ENCODE measurements at regions of chr3 and their contacts with region 1.

Region 1: DNA sequence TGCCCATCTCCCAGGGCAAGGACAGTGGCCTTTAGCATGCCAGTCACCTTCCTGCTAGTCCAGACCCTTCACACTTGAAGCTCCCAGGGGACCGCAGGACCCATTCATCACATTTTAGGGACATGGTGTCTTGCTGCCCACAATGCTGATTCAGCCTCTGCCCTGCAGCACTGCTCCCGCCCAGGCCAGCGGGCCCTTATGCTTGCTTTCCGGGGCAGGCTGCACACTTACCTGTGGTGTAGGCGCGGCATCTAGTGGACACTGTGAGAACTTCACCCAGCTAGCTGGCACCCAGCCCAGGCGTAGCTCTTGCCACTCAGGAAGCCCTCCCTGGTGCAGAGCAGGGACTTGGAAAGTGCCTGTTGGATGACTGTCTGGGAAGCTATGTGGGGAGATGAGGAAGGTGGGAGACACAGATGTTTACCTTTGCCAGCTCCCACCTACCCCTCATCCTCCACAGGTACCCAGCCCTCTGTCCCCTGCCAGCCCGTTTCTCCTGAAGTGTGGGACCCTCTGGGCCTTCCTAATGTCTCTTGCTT is 26.2 kb upstream of the NR2C2 start:
- DNase-seq: peak; percentile 76 to 95
- H3K4me3 ChIP-seq: no peak overlapping the region
- H3K27ac ChIP-seq: no peak overlapping the region
- H3K4me1 ChIP-seq: peaks cover 0 to 9% (median 1%) of the 10 kb centered on the region in 4 experiments; a peak in 4 of 7 replicates
- H3K27me3 ChIP-seq: no peaks in the 10 kb centered on the region
- CTCF ChIP-seq: peak in 2 of 3 experiments; percentile 97 to 99; a peak in 3 of 4 replicates
- EP300 ChIP-seq: peak in 1 of 2 experiments; percentile 22; a peak in 1 of 3 replicates
- POLR2A ChIP-seq: no peak
- RAD21 ChIP-seq: peak; percentile 99 to 100

Region 2: DNA sequence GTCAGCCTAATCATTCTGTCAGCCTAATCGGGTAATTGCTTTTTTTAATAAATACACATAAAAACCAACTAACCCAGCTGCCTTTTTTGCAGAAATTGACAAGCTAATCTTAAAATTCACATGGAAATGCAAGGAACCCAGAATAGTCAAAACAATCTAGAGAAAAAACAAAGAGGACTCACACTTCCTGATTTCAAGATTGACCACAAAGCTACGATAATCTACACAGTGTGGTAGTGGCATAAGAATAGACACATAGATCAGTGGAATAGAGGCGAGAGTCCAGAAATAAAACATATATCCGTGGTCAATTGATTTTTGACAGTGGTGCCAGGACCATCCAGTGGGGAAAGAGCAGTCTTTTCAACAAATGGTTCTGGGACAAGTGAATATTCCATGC is 248.6 kb before region 1 on chr3:
- CTCF ChIA-PET with region 1: interaction called, 82 read pairs
- POLR2A ChIA-PET with region 1: interaction called, 3 read pairs
- DNase-seq: no peak
- H3K4me3 ChIP-seq: no peak overlapping the region
- H3K27ac ChIP-seq: no peak overlapping the region
- H3K4me1 ChIP-seq: no peaks in the 10 kb centered on the region
- H3K27me3 ChIP-seq: no peaks in the 10 kb centered on the region
- CTCF ChIP-seq: no peak
- EP300 ChIP-seq: no peak
- POLR2A ChIP-seq: no peak
- RAD21 ChIP-seq: no peak

Region 3: GRCh38 chr3:14791343-14791945 is 129.7 kb before region 1 on chr3:
- CTCF ChIA-PET with region 1: interaction called, 308 read pairs
- POLR2A ChIA-PET with region 1: interaction called, 5 read pairs
- DNase-seq: peak; percentile 57 to 89
- H3K4me3 ChIP-seq: peak overlapping the region in 1 of 4 experiments; percentile 42; a peak in 1 of 8 replicates
- H3K27ac ChIP-seq: no peak overlapping the region
- H3K4me1 ChIP-seq: peaks cover 0 to 4% (median 2%) of the 10 kb centered on the region in 4 experiments; a peak in 4 of 7 replicates
- H3K27me3 ChIP-seq: peaks cover 0 to 3% (median 0%) of the 10 kb centered on the region in 4 experiments; a peak in 1 of 7 replicates
- CTCF ChIP-seq: peak; percentile 91 to 97 (median 96)
- EP300 ChIP-seq: no peak
- POLR2A ChIP-seq: no peak
- RAD21 ChIP-seq: peak; percentile 97 to 98

Region 4: DNA sequence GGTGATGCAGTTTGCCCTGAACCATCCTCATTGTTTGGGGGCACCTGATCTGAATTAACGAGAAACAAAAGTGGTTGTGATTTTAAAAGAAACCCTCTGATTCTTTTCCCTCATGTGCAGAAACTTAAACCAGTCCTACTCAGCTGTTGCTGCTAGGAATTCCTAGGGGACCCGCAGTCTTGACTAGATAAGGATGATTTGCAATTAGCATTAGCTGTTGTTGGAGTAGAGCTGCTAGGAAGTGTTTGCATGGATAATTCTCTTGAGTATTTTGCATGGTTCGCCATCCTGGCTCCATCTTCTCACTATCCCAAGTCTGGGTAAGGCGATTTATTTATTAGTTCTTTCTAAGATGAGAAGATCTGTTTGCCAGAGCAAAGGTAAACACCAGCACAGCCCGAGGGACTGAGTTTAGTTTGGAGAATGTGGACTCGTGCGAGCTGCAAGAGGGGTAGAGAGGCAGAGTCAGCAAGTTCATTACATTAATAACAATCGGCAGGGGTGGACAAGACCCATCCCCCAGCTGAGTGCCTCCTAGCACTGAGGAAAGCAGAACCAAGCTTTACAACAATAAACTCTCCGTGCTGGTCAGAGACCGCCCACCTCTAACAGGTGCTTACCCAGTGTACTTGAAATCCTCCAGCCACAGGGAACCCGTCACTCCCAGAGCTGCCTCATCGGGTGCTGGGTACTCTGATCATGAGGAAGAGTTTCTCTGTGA is 98.3 kb before region 1 on chr3:
- CTCF ChIA-PET with region 1: interaction called, 14 read pairs
- POLR2A ChIA-PET with region 1: no interaction called
- DNase-seq: no peak
- H3K4me3 ChIP-seq: no peak overlapping the region
- H3K27ac ChIP-seq: no peak overlapping the region
- H3K4me1 ChIP-seq: peaks cover 3 to 7% (median 5%) of the 10 kb centered on the region in 4 experiments; a peak in 6 of 7 replicates
- H3K27me3 ChIP-seq: no peaks in the 10 kb centered on the region
- CTCF ChIP-seq: no peak
- EP300 ChIP-seq: no peak
- POLR2A ChIP-seq: no peak
- RAD21 ChIP-seq: no peak

Region 5: DNA sequence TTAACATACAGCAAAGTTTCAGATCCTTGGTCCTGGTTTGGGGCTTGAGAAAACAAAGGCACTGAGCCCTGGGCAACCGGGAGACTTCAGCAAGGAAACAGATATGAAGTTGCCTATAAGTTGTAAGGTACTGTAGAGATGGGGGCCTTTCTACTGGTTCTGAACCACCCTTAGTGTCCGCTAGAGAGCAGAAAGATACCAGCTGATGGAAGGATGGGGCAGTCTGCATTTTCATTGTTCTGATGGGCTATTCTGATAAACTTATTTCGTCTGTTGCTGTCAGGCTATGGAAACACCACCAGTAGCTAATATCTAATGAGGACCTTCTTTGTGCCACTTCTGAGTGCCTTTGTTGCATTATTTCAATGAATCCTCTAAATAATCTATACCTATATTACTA is 63.6 kb before region 1 on chr3:
- CTCF ChIA-PET with region 1: interaction called, 54 read pairs
- POLR2A ChIA-PET with region 1: no interaction called
- DNase-seq: no peak
- H3K4me3 ChIP-seq: no peak overlapping the region
- H3K27ac ChIP-seq: no peak overlapping the region
- H3K4me1 ChIP-seq: peaks cover 3 to 8% (median 5%) of the 10 kb centered on the region in 4 experiments
- H3K27me3 ChIP-seq: no peaks in the 10 kb centered on the region; a peak in 1 of 7 replicates
- CTCF ChIP-seq: peak in 2 of 3 experiments; percentile 55 to 59; a peak in 3 of 4 replicates
- EP300 ChIP-seq: no peak
- POLR2A ChIP-seq: no peak
- RAD21 ChIP-seq: peak; percentile 78 to 82

Region 6: DNA sequence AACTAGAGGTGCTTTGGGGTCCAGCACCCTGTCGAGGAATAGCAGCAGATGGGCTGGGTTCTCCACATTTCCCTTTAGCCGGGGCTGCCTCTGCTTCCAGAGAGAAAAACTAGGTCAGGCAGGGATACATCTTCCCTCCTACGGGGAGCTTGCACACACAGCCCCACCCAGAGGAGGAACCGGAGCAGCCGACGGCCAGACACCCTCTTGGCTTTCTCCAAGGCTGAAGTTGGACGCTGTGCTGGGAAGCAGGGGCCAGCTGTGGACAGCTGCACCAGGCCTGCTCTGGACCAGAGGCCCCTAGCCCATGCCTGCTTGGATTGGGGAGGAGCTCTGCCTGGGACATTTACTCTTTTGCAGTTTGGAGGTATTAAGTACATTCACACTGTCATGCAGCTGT is 18.4 kb before region 1 on chr3:
- CTCF ChIA-PET with region 1: interaction called, 337 read pairs
- POLR2A ChIA-PET with region 1: interaction called, 4 read pairs
- DNase-seq: no peak
- H3K4me3 ChIP-seq: no peak overlapping the region
- H3K27ac ChIP-seq: no peak overlapping the region
- H3K4me1 ChIP-seq: peaks cover 3 to 26% (median 19%) of the 10 kb centered on the region in 4 experiments
- H3K27me3 ChIP-seq: no peaks in the 10 kb centered on the region
- CTCF ChIP-seq: no peak
- EP300 ChIP-seq: no peak
- POLR2A ChIP-seq: no peak
- RAD21 ChIP-seq: no peak

Region 7: GRCh38 chr3:15023249-15023648 is 102.1 kb after region 1 on chr3:
- CTCF ChIA-PET with region 1: interaction called, 10 read pairs
- POLR2A ChIA-PET with region 1: no interaction called
- DNase-seq: no peak
- H3K4me3 ChIP-seq: no peak overlapping the region
- H3K27ac ChIP-seq: no peak overlapping the region
- H3K4me1 ChIP-seq: peaks cover 0 to 4% (median 3%) of the 10 kb centered on the region in 4 experiments; a peak in 2 of 7 replicates
- H3K27me3 ChIP-seq: no peaks in the 10 kb centered on the region
- CTCF ChIP-seq: no peak
- EP300 ChIP-seq: no peak
- POLR2A ChIP-seq: no peak
- RAD21 ChIP-seq: no peak

Region 8: GRCh38 chr3:15071699-15072098 is 150.6 kb after region 1 on chr3:
- CTCF ChIA-PET with region 1: no interaction called
- POLR2A ChIA-PET with region 1: no interaction called
- DNase-seq: no peak
- H3K4me3 ChIP-seq: no peak overlapping the region
- H3K27ac ChIP-seq: no peak overlapping the region
- H3K4me1 ChIP-seq: no peaks in the 10 kb centered on the region
- H3K27me3 ChIP-seq: no peaks in the 10 kb centered on the region
- CTCF ChIP-seq: no peak
- EP300 ChIP-seq: no peak
- POLR2A ChIP-seq: no peak
- RAD21 ChIP-seq: no peak

Measured in H1 (cell line).